HCT116 (cell line): ENCODE measurements at regions of chr1 and their contacts with region 1.

Region 1: DNA sequence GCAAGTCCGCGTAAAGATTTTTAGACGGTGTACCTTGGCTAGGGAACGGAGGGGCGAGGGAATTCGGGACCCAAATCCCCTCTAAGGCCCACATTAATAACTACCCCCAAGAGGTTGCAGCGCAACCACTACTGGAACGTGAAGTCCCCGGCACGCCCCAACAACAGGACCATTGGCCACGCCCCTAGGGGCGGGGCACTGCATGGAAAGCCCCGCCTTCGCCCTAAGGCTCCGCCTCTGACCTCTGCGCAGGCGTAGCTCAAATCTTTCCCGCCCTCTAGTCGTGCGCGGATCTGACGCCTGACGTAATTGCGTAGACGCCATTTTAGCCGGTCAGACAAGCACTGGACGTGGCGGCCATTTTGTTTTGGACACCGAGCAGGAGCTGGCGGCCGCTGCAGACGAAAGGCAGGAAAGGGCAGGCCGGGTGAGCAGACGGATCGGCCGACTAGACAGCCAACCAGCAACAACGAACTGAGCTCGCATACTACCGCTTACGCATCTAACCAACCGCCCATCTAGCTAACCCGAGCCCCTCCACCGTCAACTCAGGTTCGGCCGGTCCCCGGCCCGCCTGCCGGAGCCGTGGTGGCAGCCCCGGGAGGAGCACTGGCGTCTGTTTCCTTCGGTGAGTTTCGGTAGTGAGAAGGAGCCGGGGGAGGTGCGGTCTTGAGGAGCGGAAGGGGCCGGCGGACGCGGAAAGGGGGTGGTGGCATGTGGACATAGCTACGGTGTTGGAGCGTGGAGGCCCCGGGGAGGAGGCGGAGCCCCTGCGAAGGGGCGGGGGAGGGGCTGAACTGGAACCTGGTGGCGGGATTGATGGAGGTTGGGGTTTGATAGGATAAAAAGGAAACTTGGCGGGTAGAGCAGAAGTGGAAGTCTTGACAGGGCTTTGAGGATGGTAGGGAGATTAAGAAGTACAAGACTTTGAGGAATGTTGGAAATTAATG is at the start of gene CHTOP:
- DNase-seq: peak; percentile 98
- ATAC-seq: peak; percentile 91
- H3K4me3 ChIP-seq: peak within 1 kb of the TSS; percentile 91 to 95
- H3K27ac ChIP-seq: peak within 1 kb of the TSS; percentile 100
- H3K4me1 ChIP-seq: peaks cover 9 to 22% of the 10 kb centered on the region in 2 experiments
- H3K27me3 ChIP-seq: no peaks in the 10 kb centered on the region
- CTCF ChIP-seq: no peak
- POLR2A ChIP-seq: peak; percentile 73
- RAD21 ChIP-seq: no peak
- total RNA-seq, gene CHTOP: 110 TPM

Region 2: GRCh38 chr1:152630632-152631031 is 1003.4 kb before region 1 on chr1:
- CTCF ChIA-PET with region 1: no interaction called
- POLR2A ChIA-PET with region 1: no interaction called
- RAD21 ChIA-PET with region 1: no interaction called
- intact Hi-C with region 1: no loop called
- DNase-seq: no peak
- ATAC-seq: no peak
- H3K4me3 ChIP-seq: no peak overlapping the region
- H3K27ac ChIP-seq: no peak overlapping the region
- H3K4me1 ChIP-seq: no peaks in the 10 kb centered on the region
- H3K27me3 ChIP-seq: peaks cover 21% of the 10 kb centered on the region; the same call in 1 of the 2 replicates
- CTCF ChIP-seq: no peak
- POLR2A ChIP-seq: no peak
- RAD21 ChIP-seq: no peak

Region 3: DNA sequence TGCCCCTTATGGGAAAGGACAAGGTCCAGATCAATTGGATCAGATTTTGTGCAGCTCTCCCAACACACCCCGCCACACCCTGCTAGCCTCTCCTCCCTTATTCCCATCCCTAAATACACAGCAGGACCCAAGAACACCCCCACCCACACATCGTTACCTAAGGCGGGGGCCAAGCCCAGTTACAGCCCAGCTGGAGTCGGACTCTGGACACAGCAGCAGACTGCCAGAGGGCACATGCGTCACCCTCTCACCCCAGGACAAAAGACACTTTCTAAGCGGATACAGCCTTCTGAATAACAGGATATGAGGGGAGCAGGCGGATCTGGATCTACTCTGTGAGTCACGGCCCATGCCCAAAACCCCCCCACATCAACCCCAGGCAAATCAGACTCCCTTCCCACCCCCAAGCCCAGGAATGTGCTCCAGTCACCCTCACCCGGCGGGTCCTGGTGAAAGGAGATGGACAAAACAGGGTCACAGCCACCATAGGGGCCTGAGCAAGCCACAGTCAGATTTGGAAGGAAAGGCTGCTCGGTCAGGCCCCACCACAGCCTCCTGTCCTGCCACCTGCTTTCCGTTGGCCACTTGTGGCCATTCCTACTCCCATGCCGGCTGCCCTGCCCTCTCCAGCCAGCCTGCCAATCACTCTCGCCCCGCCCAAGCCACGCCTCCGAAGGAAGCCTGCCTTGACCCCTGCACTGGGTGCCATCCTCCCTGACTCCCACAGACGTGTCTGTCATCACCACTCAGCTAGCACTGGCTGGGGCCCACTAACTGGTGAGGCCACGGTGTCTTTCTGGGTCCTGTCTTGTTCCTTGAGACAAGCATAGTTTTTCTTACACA is 25.0 kb before region 1 on chr1:
- CTCF ChIA-PET with region 1: interaction called, 76 read pairs
- POLR2A ChIA-PET with region 1: interaction called, 172 read pairs
- RAD21 ChIA-PET with region 1: interaction called in 1 of 2 experiments, 3 read pairs
- intact Hi-C with region 1: no loop called
- DNase-seq: peak; percentile 90
- ATAC-seq: peak; percentile 70
- H3K4me3 ChIP-seq: peak overlapping the region; percentile 51 to 59
- H3K27ac ChIP-seq: peak overlapping the region; percentile 72
- H3K4me1 ChIP-seq: peaks cover 41 to 64% of the 10 kb centered on the region in 2 experiments
- H3K27me3 ChIP-seq: no peaks in the 10 kb centered on the region
- CTCF ChIP-seq: no peak
- POLR2A ChIP-seq: peak; percentile 34
- RAD21 ChIP-seq: no peak

Region 4: GRCh38 chr1:153617675-153618074 is 16.3 kb before region 1 on chr1:
- CTCF ChIA-PET with region 1: interaction called, 76 read pairs
- POLR2A ChIA-PET with region 1: interaction called, 172 read pairs
- RAD21 ChIA-PET with region 1: interaction called in 1 of 2 experiments, 3 read pairs
- intact Hi-C with region 1: no loop called
- DNase-seq: peak; percentile 57
- ATAC-seq: peak; percentile 63
- H3K4me3 ChIP-seq: no peak overlapping the region
- H3K27ac ChIP-seq: peak overlapping the region; percentile 79
- H3K4me1 ChIP-seq: peaks cover 39 to 53% of the 10 kb centered on the region in 2 experiments
- H3K27me3 ChIP-seq: no peaks in the 10 kb centered on the region
- CTCF ChIP-seq: peak in 2 of 3 experiments; percentile 66 to 68; a peak in 4 of 6 replicates
- POLR2A ChIP-seq: no peak
- RAD21 ChIP-seq: no peak

Region 5: DNA sequence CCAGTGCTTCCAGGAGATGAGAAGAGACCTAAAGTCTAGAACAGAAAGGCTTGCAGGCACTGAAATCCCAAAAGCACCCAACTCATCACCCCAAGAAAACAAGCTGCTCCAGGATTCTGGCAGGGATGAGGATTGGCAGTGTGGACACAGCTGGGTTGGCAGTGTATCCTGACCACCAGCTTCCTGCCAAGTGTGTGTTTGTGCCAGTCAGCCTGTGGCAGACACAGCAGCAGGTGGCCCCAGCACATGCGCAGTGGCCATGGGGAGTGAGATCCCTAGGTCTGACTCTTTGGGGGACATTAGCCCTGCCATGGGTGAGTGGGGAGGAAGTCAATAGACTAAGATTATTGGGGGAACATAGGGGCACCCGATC is 15.9 kb after region 1 on chr1:
- CTCF ChIA-PET with region 1: no interaction called
- POLR2A ChIA-PET with region 1: interaction called, 27 read pairs
- RAD21 ChIA-PET with region 1: no interaction called
- intact Hi-C with region 1: no loop called
- DNase-seq: no peak
- ATAC-seq: 0 out of 2 replicates have a peak, but pooled peaks have one; percentile 23
- H3K4me3 ChIP-seq: no peak overlapping the region
- H3K27ac ChIP-seq: no peak overlapping the region
- H3K4me1 ChIP-seq: peaks cover 0 to 10% of the 10 kb centered on the region in 2 experiments; a peak in 2 of 4 replicates
- H3K27me3 ChIP-seq: no peaks in the 10 kb centered on the region
- CTCF ChIP-seq: no peak
- POLR2A ChIP-seq: no peak
- RAD21 ChIP-seq: no peak